Dorsolateral prefrontal cortex (tissue), 120 donors: ENCODE measurements at regions of chrX and their contacts with region 1.

Region 1: GRCh38 chrX:103464774-103465117 is 54.5 kb downstream of the RAB40A start:
- DNase-seq: peak in 9 of 10 donors; percentile 37 to 77 (median 60)
- H3K4me3 ChIP-seq: peak overlapping the region in 54 of 59 donors; percentile 1 to 55 (median 32)
- H3K27ac ChIP-seq: peak overlapping the region in 1 of 59 donors; percentile 38
- H3K27me3 ChIP-seq: peaks cover 0 to 72% (median 22%) of the 10 kb centered on the region in 45 donors
- CTCF ChIP-seq: peak; percentile 32 to 81 (median 74)

Region 2: GRCh38 chrX:103214870-103215424 is 249.8 kb before region 1 on chrX and contains the start of gene BEX4:
- intact Hi-C with region 1: loop called in 1 of 2 experiments (anchors 2 kb)
- DNase-seq: peak; percentile 81 to 91 (median 89)
- H3K4me3 ChIP-seq: peak within 1 kb of the TSS; percentile 41 to 90 (median 75)
- H3K27ac ChIP-seq: peak within 1 kb of the TSS; percentile 65 to 97 (median 93)
- H3K27me3 ChIP-seq: peaks cover 0 to 82% (median 24%) of the 10 kb centered on the region in 45 donors
- CTCF ChIP-seq: peak in 3 of 56 donors; percentile 10 to 20 (median 10)
- total RNA-seq, gene BEX4: 48.8 to 251 (median 170) TPM

Region 3: GRCh38 chrX:103254921-103255493 is 209.7 kb before region 1 on chrX and contains the start of gene TCEAL8:
- intact Hi-C with region 1: loop called in 1 of 2 experiments (anchors 2 kb)
- DNase-seq: peak; percentile 78 to 94 (median 88)
- H3K4me3 ChIP-seq: peak within 1 kb of the TSS; percentile 43 to 81 (median 65)
- H3K27ac ChIP-seq: peak within 1 kb of the TSS in 58 of 59 donors; percentile 45 to 94 (median 85)
- H3K27me3 ChIP-seq: peaks cover 0 to 64% (median 11%) of the 10 kb centered on the region in 45 donors
- CTCF ChIP-seq: no peak
- total RNA-seq, gene TCEAL8: 25.0 to 65.5 (median 52.4) TPM

Region 4: DNA sequence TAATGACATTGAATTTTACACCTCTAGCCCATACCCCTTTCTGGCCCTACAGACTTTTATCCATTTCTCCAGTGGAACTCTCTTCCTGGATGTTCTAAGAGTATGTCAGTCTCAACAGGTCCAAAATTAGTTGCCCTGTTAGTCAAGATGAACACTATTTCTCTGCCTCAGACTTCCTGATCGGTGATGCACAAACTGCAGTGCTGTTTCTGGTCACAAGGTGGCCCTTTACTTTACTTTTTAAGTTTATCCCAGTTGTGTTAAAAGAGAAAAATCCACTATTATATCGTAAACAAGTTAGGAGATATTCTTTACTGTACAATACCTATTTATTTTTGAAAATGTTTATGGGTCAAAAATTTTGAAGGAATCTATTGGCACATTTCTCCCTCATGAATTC is 121.6 kb before region 1 on chrX:
- intact Hi-C with region 1: loop called (anchors 5 to 10 kb)
- DNase-seq: peak in 4 of 10 donors; percentile 21 to 38 (median 30)
- H3K4me3 ChIP-seq: no peak overlapping the region
- H3K27ac ChIP-seq: no peak overlapping the region
- H3K27me3 ChIP-seq: peaks cover 0 to 76% (median 14%) of the 10 kb centered on the region in 45 donors
- CTCF ChIP-seq: peak; percentile 39 to 80 (median 69)

Region 5: GRCh38 chrX:103376118-103376978 is 88.4 kb before region 1 on chrX and contains the start of gene BEX3:
- intact Hi-C with region 1: loop called in 1 of 2 experiments (anchors 10 kb)
- DNase-seq: peak; percentile 54 to 81 (median 74)
- H3K4me3 ChIP-seq: peak within 1 kb of the TSS; percentile 39 to 84 (median 68)
- H3K27ac ChIP-seq: peak within 1 kb of the TSS; percentile 41 to 97 (median 91)
- H3K27me3 ChIP-seq: peaks cover 0 to 52% (median 15%) of the 10 kb centered on the region in 45 donors
- CTCF ChIP-seq: peak in 3 of 56 donors; percentile 8 to 17 (median 14)
- total RNA-seq, gene BEX3: 147 to 505 (median 357) TPM